Activated CD8-positive, alpha-beta T cell treated with anti-CD3 and anti-CD28 coated beads for 36 hours (primary cell): ENCODE measurements at regions of chr3 and their contacts with region 1.

Region 1: DNA sequence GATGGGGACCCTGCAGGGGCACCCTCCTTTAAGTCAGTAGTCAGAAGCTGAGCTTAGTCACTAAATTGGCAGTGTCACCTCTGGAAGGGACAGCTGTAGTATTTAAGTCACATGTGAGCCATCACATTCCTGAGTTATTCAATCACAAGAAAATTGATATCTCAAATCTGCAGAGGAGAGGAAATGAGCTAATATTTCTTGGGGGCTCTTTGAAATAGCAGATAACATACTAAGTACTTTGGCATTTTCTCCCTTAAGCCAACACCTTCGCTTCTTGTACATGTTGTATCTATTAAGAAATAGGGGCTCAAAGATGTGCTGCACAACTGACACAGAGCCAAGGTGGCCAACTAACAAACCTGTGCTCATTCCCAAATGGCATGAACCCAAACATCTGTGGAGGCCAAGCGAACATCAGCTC is 63.1 kb downstream of the ABHD5 start:
- DNase-seq: no peak
- ATAC-seq: no peak
- H3K4me3 Mint-ChIP-seq: no peak overlapping the region
- H3K27ac Mint-ChIP-seq: no peak overlapping the region
- H3K4me1 Mint-ChIP-seq: peaks cover 30% of the 10 kb centered on the region
- H3K27me3 Mint-ChIP-seq: no peaks in the 10 kb centered on the region
- CTCF ChIP-seq: no peak

Region 2: GRCh38 chr3:43769471-43770425 is 16.0 kb after region 1 on chr3:
- CTCF ChIA-PET with region 1: interaction called, 22 read pairs
- POLR2A ChIA-PET with region 1: interaction called, 3 read pairs
- intact Hi-C with region 1: no loop called
- DNase-seq: peak; percentile 87
- ATAC-seq: peak; percentile 62
- H3K4me3 Mint-ChIP-seq: no peak overlapping the region
- H3K27ac Mint-ChIP-seq: no peak overlapping the region
- H3K4me1 Mint-ChIP-seq: peaks cover 34% of the 10 kb centered on the region
- H3K27me3 Mint-ChIP-seq: peaks cover 6% of the 10 kb centered on the region
- CTCF ChIP-seq: peak; percentile 88